Tibial artery (tissue), 4 donors: ENCODE measurements at regions of chr19 and their contacts with region 1.

Region 1: DNA sequence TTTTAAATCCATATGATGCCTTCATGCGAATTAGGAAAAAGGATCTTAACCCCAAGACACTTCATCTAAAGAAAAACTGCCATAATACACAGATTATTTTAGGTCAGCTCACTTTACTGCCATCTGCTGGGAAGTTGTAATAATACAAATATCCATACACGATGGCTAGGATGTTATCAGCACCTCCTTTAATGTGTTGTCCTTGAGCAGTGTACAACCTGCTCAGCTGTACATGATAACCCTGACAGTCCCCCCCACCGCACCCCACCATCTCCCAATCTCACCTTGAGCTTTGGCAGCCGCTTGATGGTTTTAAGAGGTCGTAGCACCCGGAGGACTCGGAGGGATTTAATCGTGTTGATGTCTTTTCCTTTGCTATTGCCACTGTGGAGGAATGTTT is 112.2 kb downstream of the IER2 start:
- DNase-seq: no peak
- H3K4me3 ChIP-seq: no peak overlapping the region
- H3K27ac ChIP-seq: no peak overlapping the region
- H3K4me1 ChIP-seq: peaks cover 0 to 5% (median 2%) of the 10 kb centered on the region in 4 donors
- H3K27me3 ChIP-seq: peaks cover 0 to 11% of the 10 kb centered on the region in 2 donors
- CTCF ChIP-seq: peak; percentile 49 to 72

Region 2: GRCh38 chr19:12965017-12965811 is 297.2 kb before region 1 on chr19:
- intact Hi-C with region 1: loop called (anchors 5 kb)
- DNase-seq: peak; percentile 78 to 88
- H3K4me3 ChIP-seq: peak overlapping the region; percentile 45 to 46
- H3K27ac ChIP-seq: peak overlapping the region; percentile 48 to 62
- H3K4me1 ChIP-seq: peaks cover 0 to 15% (median 4%) of the 10 kb centered on the region in 4 donors
- H3K27me3 ChIP-seq: no peaks in the 10 kb centered on the region
- CTCF ChIP-seq: peak; percentile 90 to 96

Region 3: DNA sequence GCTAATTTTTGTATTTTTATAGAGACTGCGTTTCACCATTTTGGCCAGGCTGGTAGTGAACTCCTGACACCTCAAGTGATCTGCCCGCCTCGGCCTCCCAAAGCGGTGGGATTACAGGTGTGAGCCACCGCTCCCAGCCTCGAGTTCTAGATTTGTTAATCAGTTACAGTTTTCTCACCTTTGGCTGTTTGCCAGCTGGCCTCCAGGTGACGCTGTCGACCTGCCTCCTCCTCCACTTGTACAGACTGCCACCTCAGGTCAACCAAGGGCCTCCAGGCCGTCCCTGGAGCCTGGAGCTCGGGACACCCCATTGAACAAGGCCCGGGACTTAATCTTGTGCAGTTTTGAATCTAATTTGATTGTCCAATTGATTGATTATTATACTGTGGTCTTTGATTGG is 66.8 kb before region 1 on chr19:
- intact Hi-C with region 1: loop called (anchors 5 kb)
- DNase-seq: no peak
- H3K4me3 ChIP-seq: no peak overlapping the region
- H3K27ac ChIP-seq: no peak overlapping the region
- H3K4me1 ChIP-seq: no peaks in the 10 kb centered on the region
- H3K27me3 ChIP-seq: no peaks in the 10 kb centered on the region
- CTCF ChIP-seq: no peak

Region 4: DNA sequence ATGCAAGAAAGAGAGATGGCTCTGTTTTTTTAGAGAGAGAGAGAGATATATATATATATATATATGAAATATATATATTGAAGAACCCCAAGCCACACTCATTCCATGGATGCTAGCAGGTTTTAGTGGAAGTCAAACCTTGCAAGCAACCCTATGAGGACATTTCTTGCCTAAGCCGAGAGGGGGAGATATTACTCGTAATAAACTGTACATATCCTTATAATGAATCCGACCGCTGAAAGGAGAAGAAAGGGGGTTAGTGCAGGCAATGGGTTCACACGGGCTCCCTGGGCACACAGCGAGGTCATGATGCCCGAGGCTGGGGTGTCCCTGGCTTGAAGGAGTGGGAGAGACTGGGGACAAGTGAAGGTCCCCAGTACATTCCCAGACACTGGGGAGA is 33.9 kb before region 1 on chr19:
- intact Hi-C with region 1: no loop called
- DNase-seq: no peak
- H3K4me3 ChIP-seq: no peak overlapping the region
- H3K27ac ChIP-seq: no peak overlapping the region
- H3K4me1 ChIP-seq: no peaks in the 10 kb centered on the region
- H3K27me3 ChIP-seq: peaks cover 0 to 39% of the 10 kb centered on the region in 2 donors
- CTCF ChIP-seq: no peak

Region 5: GRCh38 chr19:13347367-13347766 is 84.9 kb after region 1 on chr19:
- intact Hi-C with region 1: no loop called
- DNase-seq: no peak
- H3K4me3 ChIP-seq: no peak overlapping the region
- H3K27ac ChIP-seq: no peak overlapping the region
- H3K4me1 ChIP-seq: no peaks in the 10 kb centered on the region
- H3K27me3 ChIP-seq: peaks cover 0 to 12% of the 10 kb centered on the region in 2 donors
- CTCF ChIP-seq: no peak

Region 6: GRCh38 chr19:13428336-13428735 is 165.9 kb after region 1 on chr19:
- intact Hi-C with region 1: no loop called
- DNase-seq: no peak
- H3K4me3 ChIP-seq: no peak overlapping the region
- H3K27ac ChIP-seq: no peak overlapping the region
- H3K4me1 ChIP-seq: no peaks in the 10 kb centered on the region
- H3K27me3 ChIP-seq: no peaks in the 10 kb centered on the region
- CTCF ChIP-seq: peak; percentile 9 to 13